H1 (cell line): ENCODE measurements at regions of chr10 and their contacts with region 1.

Region 1: DNA sequence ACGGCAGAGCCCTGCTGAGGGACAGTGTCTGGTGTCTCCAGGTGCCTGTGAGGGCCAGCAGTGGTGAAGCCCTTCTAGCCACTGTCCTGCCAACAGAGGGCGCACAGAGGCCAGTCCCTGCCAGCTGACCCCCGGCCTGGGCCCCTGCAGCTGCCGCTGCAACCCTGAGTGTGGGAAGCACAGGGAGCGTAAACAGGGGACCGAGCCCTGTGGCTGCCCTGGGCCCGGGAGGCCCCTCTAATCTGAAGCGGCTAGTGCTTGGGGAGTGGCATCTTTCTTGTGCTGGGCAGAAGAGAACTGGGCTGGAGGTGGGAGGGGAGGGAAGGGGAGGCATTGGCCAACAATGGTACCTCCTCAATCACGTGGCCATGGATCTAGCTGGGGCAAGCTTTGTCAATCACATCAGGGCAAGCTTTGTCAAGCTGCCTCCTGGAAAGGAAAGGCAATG is 34.6 kb downstream of the TRIM8 start:
- DNase-seq: peak in 1 of 2 experiments; percentile 93
- H3K4me3 ChIP-seq: peak overlapping the region in 1 of 4 experiments; percentile 43; a peak in 1 of 8 replicates
- H3K27ac ChIP-seq: peak overlapping the region; percentile 46; the same call in 1 of the 2 replicates
- H3K4me1 ChIP-seq: peaks cover 23 to 44% (median 26%) of the 10 kb centered on the region in 4 experiments
- H3K27me3 ChIP-seq: no peaks in the 10 kb centered on the region
- CTCF ChIP-seq: peak; percentile 86 to 95 (median 94)
- EP300 ChIP-seq: no peak
- POLR2A ChIP-seq: peak in 1 of 2 experiments; percentile 49; a peak in 2 of 3 replicates
- RAD21 ChIP-seq: peak; percentile 67 to 77

Region 2: DNA sequence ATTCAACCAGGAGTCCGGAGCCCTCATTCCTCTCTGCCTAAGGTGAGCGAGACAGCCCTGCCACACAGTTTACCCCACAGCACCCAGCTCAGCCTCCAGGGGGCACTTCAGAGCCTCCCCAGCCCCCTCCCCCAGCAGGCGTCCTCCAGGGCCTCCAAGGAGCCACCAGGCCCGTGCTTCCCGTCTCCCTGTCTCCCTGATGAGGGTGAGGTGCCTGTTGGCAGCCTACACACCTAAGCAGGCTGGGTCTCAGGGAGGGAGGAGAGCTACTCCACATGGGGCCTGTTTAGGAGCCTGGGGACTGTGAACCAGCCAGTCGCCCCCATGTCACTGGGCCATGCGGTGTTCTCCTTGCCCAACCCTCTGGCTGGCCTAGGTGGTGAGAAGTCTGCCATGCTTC is 63.5 kb before region 1 on chr10:
- CTCF ChIA-PET with region 1: interaction called, 27 read pairs
- POLR2A ChIA-PET with region 1: no interaction called
- DNase-seq: peak in 1 of 2 experiments; percentile 86
- H3K4me3 ChIP-seq: no peak overlapping the region
- H3K27ac ChIP-seq: no peak overlapping the region
- H3K4me1 ChIP-seq: peaks cover 0 to 6% (median 2%) of the 10 kb centered on the region in 4 experiments; a peak in 4 of 7 replicates
- H3K27me3 ChIP-seq: no peaks in the 10 kb centered on the region
- CTCF ChIP-seq: peak; percentile 78 to 83 (median 80)
- EP300 ChIP-seq: no peak
- POLR2A ChIP-seq: no peak
- RAD21 ChIP-seq: peak; percentile 71 to 82

Region 3: DNA sequence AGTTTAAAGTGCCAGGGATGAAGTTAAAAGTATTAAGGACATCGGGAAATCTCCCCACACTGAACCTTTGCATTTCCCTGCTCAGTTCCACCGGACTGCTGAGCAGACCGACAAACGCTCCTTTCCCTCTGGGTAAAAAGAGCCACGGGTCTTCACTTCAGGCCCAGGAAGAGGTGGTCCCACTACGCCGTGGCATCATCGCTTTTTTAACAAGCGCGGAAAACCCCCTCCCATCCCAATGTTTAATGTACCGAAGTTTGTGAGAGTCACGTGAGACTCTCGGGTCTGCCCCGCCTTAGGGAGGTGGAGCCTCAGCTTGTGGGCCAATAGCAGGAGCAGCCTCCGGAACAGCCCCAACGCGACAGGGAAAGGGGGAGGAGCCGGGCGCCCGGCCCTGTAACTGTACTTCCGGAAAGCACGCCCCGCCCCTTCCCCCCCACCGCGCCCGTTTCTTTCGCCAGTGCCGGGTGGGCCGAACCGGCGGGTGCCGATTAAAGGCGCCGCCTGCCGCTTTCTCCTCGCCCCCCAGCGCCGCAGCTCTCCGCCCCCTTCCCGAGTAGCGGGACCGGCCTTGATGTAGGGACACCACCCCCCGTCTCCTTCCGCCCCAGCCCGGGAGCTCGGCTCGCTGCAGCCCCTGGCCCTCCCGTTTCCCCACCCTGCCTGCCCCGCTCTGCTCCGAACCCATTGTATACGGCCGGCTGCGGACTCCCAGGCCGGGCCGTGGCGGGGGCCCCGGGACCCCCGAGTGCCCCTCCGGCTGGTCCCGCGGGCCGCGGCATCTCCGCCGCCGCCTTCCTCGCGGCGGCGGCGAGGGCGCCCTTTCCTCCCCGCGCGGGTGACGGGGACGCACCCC is 36.8 kb before region 1 on chr10:
- CTCF ChIA-PET with region 1: interaction called, 11 read pairs
- POLR2A ChIA-PET with region 1: interaction called, 10 read pairs
- DNase-seq: peak; percentile 94
- H3K4me3 ChIP-seq: peak overlapping the region; percentile 40 to 81 (median 63)
- H3K27ac ChIP-seq: peak overlapping the region; percentile 80; the same call in 1 of the 2 replicates
- H3K4me1 ChIP-seq: peaks cover 6 to 16% (median 13%) of the 10 kb centered on the region in 4 experiments
- H3K27me3 ChIP-seq: no peaks in the 10 kb centered on the region
- CTCF ChIP-seq: no peak
- EP300 ChIP-seq: no peak
- POLR2A ChIP-seq: peak in 1 of 2 experiments; percentile 77; a peak in 2 of 3 replicates
- RAD21 ChIP-seq: no peak

Region 4: GRCh38 chr10:102660888-102661657 is 17.8 kb before region 1 on chr10:
- CTCF ChIA-PET with region 1: interaction called, 73 read pairs
- POLR2A ChIA-PET with region 1: interaction called, 6 read pairs
- DNase-seq: peak in 1 of 2 experiments; percentile 62
- H3K4me3 ChIP-seq: peak overlapping the region in 1 of 4 experiments; percentile 16; a peak in 1 of 8 replicates
- H3K27ac ChIP-seq: no peak overlapping the region
- H3K4me1 ChIP-seq: peaks cover 0 to 12% (median 7%) of the 10 kb centered on the region in 4 experiments; a peak in 5 of 7 replicates
- H3K27me3 ChIP-seq: no peaks in the 10 kb centered on the region
- CTCF ChIP-seq: no peak
- EP300 ChIP-seq: no peak
- POLR2A ChIP-seq: no peak
- RAD21 ChIP-seq: no peak

Region 5: GRCh38 chr10:102713814-102714620 is 35.2 kb after region 1 on chr10 and contains the start of gene ARL3:
- CTCF ChIA-PET with region 1: interaction called, 10 read pairs
- POLR2A ChIA-PET with region 1: interaction called, 22 read pairs
- DNase-seq: peak; percentile 97
- H3K4me3 ChIP-seq: peak within 1 kb of the TSS; percentile 85 to 96 (median 92)
- H3K27ac ChIP-seq: peak within 1 kb of the TSS; percentile 89
- H3K4me1 ChIP-seq: peaks cover 5 to 22% (median 14%) of the 10 kb centered on the region in 4 experiments; a peak in 6 of 7 replicates
- H3K27me3 ChIP-seq: no peaks in the 10 kb centered on the region
- CTCF ChIP-seq: peak in 2 of 3 experiments; percentile 42 to 66; a peak in 3 of 4 replicates
- EP300 ChIP-seq: 0 out of 3 replicates have a peak, but pooled peaks of 1 of the 2 experiments have one; percentile 27
- POLR2A ChIP-seq: peak in 1 of 2 experiments; percentile 77; a peak in 2 of 3 replicates
- RAD21 ChIP-seq: no peak; a peak in 1 of 4 replicates
- total RNA-seq, gene ARL3: 15.3 and 16.2 TPM in 2 replicates